Motor neuron (in vitro differentiated cells): ENCODE measurements at regions of chr2 and their contacts with region 1.

Region 1: DNA sequence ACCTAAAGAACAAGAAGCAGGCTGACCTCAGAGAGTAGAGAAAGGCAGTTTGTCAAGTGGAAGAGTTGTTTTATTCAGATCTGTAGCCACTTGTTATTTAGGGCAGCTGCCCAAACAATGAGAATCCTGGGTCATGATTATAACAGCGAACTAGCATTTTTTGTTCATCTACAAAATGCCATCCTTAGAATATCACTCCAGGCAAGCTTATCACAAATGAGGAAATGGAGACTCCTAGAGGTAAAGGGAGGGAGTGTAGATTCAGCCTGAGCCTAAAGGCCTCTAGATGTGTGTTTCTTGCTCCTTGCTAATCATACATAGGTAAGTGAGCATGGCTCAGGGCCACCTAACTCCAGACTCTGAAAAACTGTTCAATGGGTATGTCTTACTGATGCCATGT is 126.1 kb downstream of the HNMT start:
- ATAC-seq: peak in 4 of 8 experiments; percentile 39 to 80 (median 64)
- H3K4me3 ChIP-seq: no peak overlapping the region
- H3K27ac ChIP-seq: no peak overlapping the region
- H3K4me1 ChIP-seq: peaks cover 0 to 3% of the 10 kb centered on the region in 2 donors

Region 2: DNA sequence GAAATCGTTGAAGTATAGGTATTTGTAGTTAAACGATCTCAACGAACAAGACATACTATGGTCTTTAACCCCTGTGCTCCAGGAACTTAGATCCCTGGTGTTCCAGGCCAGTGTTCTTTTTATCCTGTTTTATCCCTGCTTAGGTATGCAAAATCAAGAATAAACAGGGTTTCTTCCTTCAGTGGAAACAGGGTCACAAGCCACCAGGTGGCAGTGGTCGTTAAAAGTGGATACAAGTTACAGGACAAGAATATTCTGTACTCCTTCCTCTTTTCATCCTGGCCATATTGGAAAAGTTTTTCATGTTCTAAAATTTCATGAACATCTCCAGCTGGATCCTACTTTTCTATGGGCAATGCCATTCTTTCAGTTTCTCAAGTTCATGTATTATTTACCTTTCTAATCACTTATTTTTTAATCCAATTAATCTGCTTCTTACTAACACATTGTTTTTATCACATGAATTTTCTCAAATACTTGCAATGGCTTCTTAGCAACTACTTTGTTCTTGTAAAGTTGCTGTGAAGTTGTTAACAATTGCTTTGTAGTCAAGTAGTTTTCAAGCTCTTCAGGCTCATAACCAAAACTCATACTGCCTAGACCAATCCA is 142.5 kb before region 1 on chr2:
- in situ Hi-C with region 1: loop called in 1 of 9 experiments (anchors 25 kb)
- ATAC-seq: peak in 6 of 8 experiments; percentile 37 to 83 (median 73)
- H3K4me3 ChIP-seq: no peak overlapping the region
- H3K27ac ChIP-seq: no peak overlapping the region
- H3K4me1 ChIP-seq: peaks cover 0 to 8% of the 10 kb centered on the region in 2 donors

Region 3: GRCh38 chr2:138814120-138814898 is 724.0 kb after region 1 on chr2:
- in situ Hi-C with region 1: loop called in 1 of 9 experiments (anchors 25 kb)
- ATAC-seq: peak in 1 of 8 experiments; percentile 56
- H3K4me3 ChIP-seq: no peak overlapping the region
- H3K27ac ChIP-seq: no peak overlapping the region
- H3K4me1 ChIP-seq: no peaks in the 10 kb centered on the region